GM13976 (cell line): ENCODE measurements at regions of chr4 and their contacts with region 1.

Region 1: DNA sequence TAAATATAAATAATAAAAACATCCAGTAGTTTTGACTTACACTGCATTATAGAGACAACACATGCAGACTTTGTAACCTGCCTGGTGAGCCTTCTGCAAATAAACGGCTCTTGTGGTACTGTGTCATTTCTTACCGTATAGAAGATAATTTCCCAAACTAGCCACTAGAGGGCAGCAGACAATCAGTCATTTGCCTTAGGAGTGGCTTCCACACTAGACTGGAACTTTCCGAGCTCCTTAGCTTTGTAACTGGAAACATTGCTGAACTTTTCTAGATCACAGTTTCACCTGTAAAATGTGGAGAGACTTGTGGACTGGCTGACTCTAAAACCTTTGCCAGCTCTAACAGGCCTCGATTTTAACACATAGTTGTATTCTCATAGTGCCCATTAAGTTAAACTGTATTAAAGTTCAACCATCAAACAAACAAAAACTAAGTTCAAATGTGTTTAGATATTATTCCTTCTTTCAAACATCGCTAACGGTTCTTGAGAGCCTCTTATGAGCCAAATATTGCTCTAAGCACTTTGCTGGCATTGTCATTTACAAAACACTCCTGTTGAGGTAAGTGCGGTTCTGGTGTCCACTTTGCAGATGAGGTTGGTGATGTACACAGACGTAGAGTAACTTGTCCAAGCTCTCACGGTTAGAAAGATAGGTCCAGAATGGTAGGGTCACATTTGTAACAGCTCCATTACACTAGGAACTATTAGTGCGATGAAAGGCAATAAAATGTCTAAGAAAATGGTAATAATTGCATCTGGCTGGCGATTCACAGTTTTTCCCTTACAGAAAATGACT is 345.5 kb downstream of the ANK2 start:
- DNase-seq: peak; percentile 41
- CTCF ChIP-seq: peak; percentile 69

Region 2: DNA sequence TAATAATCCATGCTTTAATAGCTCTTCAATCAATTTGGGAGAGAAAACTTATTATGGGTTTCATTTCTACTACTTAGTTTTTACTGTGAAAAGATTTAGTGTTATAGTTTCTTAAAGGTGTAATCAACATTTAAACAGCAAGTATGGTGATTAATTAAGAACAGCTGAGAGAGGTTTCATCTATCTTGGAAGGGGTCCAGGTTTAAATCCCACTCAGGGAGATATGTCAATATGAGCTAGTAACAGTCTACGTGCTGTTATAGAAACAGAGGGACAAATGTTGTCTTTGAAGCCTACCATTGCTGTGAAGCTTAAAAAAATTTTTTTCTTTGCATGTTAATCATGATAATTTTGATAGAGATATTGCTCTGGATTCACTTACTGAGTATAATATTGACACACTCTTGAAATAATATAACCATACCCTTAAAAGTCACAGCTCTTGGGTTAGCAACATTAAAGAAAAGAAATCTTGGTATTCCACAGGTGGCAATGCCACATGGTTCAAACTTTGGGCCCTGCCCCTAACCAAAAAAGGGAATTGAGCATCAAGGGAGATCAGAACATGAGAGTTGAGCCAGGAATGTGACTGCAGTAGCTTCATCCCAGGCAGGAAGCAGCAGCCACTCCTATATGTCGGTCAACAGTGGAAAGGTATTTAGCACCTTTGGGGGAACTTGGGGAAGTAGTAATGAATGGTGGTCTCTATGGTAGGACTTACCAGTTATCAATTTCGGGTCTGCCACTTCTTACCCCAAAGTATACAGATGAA is 237.7 kb before region 1 on chr4:
- in situ Hi-C with region 1: no loop called
- DNase-seq: no peak
- CTCF ChIP-seq: no peak

Region 3: DNA sequence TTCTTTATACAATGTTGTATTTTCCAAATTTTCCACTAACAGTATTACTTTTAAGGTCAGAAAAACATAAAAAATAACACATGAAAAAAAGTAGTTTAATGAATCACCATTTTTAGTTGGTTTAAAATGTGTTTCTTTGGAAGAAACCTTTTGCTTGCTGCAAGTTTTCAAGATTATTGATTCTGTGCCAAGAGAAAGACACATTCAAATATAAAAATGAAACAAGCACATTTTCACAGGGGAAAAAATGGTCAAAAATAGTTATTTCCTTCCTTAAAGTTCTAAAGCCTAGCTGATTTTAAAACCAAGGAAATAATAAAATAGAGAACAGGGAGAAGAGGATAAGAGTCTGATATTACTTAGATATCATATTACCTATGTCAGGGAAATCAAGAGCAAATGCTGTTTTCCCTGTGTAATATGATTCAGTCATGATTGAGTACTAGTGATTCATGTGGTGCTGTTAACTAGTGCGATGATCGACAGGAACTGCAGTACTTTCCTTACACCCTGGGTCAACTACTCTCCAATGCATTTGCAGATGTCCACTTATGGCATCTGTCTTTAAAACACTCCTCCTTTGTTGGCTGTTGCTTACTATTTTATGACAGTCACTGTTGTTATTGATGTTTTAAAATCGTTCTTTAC is 262.8 kb after region 1 on chr4:
- in situ Hi-C with region 1: no loop called
- DNase-seq: no peak
- CTCF ChIP-seq: no peak

Region 4: GRCh38 chr4:113761620-113762185 is 366.8 kb after region 1 on chr4 and contains the start of gene CAMK2D:
- in situ Hi-C with region 1: loop called (anchors 25 kb)
- DNase-seq: peak; percentile 82
- CTCF ChIP-seq: peak; percentile 74

Region 5: DNA sequence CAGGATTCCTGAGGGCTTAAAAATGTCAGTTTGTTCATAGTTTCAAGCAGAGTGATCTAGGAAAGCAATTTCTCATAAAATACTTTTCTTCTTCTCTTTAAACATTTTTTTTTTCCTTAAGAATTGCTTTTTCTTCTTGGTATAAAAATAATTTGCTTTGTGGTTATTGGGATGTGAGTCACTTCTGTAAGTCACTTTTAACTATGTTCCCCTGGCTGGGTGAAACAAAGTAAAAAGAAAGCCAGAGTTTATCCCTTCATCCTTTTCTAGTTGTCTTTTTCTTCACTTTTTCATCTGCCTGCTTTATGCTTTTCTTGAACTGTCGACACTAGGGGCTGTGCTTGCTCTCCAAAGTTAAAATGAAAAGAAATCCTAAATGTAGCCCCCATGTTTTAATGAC is 551.0 kb after region 1 on chr4:
- in situ Hi-C with region 1: loop called (anchors 25 kb)
- DNase-seq: no peak
- CTCF ChIP-seq: no peak

Region 6: GRCh38 chr4:114052227-114052626 is 657.3 kb after region 1 on chr4:
- in situ Hi-C with region 1: loop called (anchors 25 kb)
- DNase-seq: no peak
- CTCF ChIP-seq: no peak

Region 7: DNA sequence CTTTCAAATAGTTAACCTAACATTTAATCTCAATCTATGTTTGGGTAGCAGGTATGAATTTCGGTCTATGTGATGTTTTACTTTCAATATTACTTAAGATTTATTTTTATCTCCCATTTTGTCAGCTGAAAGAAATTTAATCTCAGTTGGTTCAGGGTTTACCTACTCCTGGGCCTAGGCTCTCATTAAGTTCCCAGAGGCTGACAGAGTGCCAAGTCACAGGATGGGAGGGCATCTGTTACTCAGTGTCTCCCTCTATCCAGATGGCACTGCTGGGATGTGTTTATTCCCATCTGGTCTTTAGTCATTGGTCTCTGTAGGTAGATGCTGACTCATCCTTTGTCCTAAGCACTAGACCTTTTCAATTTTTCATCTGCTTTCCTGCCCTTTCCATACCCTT is 713.9 kb after region 1 on chr4:
- in situ Hi-C with region 1: no loop called
- DNase-seq: no peak
- CTCF ChIP-seq: no peak

Region 8: DNA sequence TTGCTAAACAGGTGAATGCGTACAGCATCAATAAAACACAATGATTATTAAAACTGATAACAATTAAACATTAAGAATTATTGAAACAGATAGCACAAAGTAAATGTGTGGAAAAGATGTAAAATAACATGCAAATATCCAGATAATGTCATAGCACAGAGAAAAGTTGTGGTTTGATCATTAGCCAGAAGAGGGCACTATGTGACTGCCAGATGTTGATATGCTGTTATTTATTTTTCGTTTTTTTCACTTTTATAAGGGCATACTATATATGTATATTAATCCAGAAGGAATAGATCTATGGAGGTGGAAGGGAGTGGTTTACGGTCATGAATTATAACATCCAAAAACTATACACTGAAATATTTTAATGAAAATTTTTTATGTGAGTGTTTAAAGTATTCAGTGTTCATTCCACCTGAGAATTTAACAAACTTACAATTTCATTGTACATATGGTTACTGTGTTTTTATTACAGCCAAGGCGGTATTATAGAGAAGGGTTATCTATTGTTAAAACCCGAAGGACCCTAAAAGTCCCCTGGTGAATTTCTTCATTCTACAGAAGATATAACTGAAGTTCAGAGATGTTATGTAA is 991.8 kb after region 1 on chr4:
- in situ Hi-C with region 1: loop called (anchors 25 kb)
- DNase-seq: peak; percentile 24
- CTCF ChIP-seq: peak; percentile 46

Region 9: GRCh38 chr4:114694770-114695169 is 1299.8 kb after region 1 on chr4:
- in situ Hi-C with region 1: loop called (anchors 25 kb)
- DNase-seq: no peak
- CTCF ChIP-seq: peak; percentile 29